T-cell (primary cell): ENCODE measurements at regions of chr11 and their contacts with region 1.

Region 1: DNA sequence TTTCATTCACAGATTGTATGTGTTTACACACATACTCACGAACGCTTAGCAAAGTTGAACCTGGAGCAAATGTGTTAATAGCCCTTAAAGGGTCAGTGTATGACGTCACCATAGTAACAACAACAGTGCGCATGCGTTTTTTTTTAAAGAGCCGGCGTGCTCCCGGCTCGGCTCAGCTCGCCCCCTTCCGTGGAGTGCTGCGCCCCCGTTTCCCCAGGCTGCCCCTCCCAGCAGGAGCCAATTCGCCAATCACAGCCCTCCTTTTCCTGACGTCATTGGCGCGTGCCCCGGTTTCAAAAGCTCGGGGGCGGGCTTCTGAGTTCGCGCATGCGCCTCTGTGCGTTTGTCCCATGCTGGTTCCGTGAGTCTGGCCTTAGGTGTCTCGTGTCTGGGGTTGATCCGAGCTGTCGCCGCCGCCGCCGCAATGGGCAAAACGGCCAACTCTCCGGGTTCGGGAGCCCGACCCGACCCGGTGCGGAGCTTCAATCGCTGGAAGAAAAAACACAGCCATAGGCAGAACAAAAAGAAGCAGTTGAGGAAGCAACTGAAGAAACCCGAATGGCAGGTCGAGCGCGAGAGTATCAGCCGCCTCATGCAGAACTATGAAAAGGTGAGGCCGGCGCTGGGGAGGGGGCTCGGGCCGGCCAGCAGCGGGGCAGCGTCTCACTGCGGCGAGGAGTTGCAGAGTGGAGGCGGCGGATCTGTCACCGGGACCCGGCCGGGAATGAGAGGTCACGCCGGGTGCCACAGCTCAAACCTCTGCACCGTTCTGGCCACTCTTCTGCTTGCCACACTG is at the start of gene DDX10:
- DNase-seq: peak; percentile 93 to 100 (median 97)
- ATAC-seq: peak; percentile 99 to 100 (median 100)
- H3K4me3 ChIP-seq: peak within 1 kb of the TSS; percentile 40 to 93
- H3K4me3 Mint-ChIP-seq: peak within 1 kb of the TSS; percentile 93 to 100 (median 100)
- H3K27ac ChIP-seq: peak within 1 kb of the TSS; percentile 72
- H3K27ac Mint-ChIP-seq: peak within 1 kb of the TSS; percentile 91 to 94
- H3K4me1 ChIP-seq: peaks cover 15 to 23% of the 10 kb centered on the region in 2 experiments
- H3K4me1 Mint-ChIP-seq: peaks cover 48 to 51% (median 49%) of the 10 kb centered on the region in 3 donors
- H3K27me3 ChIP-seq: no peaks in the 10 kb centered on the region
- H3K27me3 Mint-ChIP-seq: no peaks in the 10 kb centered on the region
- total RNA-seq, gene DDX10: 23.5 to 30.0 (median 27.0) TPM

Region 2: DNA sequence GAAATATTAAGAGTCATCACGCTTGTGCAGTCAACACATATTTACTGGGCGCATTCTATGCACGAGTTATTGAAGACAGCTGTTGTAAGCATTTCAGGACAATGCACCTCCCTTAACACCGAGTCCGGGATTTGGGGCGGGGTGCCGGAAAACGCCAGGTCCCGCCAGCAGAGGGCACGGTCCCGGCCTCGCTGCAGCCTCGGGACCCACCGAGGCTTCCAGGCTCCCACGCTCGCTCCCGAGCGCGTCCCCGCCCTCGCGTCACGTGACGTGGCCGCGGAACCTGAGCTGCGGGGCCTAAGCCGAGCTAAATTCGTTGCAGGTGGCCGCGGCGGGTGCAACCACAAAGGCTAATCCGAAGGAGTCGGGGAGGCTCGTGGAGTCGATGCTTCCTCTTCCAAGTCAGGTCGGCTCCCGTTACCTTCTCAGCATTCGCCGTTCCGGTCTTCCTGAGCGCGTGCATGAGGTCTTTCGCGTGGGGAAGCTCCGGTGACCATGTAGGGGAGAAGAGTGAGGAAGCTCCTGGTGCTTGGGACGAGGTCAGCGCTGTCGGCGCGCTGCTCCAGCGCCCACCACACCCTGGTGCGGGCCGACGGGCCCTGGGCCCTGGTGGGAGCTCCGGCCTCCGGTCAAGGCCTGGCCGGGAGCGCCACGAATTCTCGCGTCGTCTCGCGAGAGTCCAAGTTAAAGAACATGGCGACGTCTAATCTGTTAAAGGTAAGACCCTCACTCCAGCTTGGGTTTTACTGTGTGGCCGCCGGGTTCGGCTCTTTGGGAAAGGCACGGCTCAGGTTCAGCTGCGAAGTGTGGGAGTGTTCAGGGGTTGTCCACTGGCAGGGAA is 656.1 kb before region 1 on chr11 and contains the start of gene CUL5:
- CTCF ChIA-PET with region 1: interaction called in 1 of 2 experiments, 13 read pairs
- POLR2A ChIA-PET with region 1: interaction called in 1 of 2 experiments, 5 read pairs
- DNase-seq: peak; percentile 78 to 94 (median 85)
- ATAC-seq: peak; percentile 88 to 92 (median 90)
- H3K4me3 ChIP-seq: peak within 1 kb of the TSS; percentile 99
- H3K4me3 Mint-ChIP-seq: peak within 1 kb of the TSS in 2 of 3 donors; percentile 98 to 99
- H3K27ac ChIP-seq: peak within 1 kb of the TSS; percentile 97
- H3K27ac Mint-ChIP-seq: peak within 1 kb of the TSS; percentile 93 to 95
- H3K4me1 ChIP-seq: peaks cover 20 to 23% of the 10 kb centered on the region in 2 experiments
- H3K4me1 Mint-ChIP-seq: peaks cover 5 to 23% (median 12%) of the 10 kb centered on the region in 3 donors
- H3K27me3 ChIP-seq: no peaks in the 10 kb centered on the region
- H3K27me3 Mint-ChIP-seq: no peaks in the 10 kb centered on the region
- total RNA-seq, gene CUL5: 36.2 to 50.6 (median 42.7) TPM

Region 3: GRCh38 chr11:108647701-108648527 is 17.0 kb before region 1 on chr11:
- CTCF ChIA-PET with region 1: interaction called, 3 to 21 read pairs
- POLR2A ChIA-PET with region 1: no interaction called
- DNase-seq: peak; percentile 15 to 79 (median 52)
- ATAC-seq: peak; percentile 81 to 87 (median 82)
- H3K4me3 ChIP-seq: no peak overlapping the region
- H3K4me3 Mint-ChIP-seq: no peak overlapping the region
- H3K27ac ChIP-seq: no peak overlapping the region
- H3K27ac Mint-ChIP-seq: no peak overlapping the region
- H3K4me1 ChIP-seq: no peaks in the 10 kb centered on the region
- H3K4me1 Mint-ChIP-seq: no peaks in the 10 kb centered on the region
- H3K27me3 ChIP-seq: peaks cover 0 to 4% of the 10 kb centered on the region in 2 experiments
- H3K27me3 Mint-ChIP-seq: no peaks in the 10 kb centered on the region